ENCODE measurements at regions of chr6 and their contacts with region 1.

Region 1: GRCh38 chr6:30907758-30908591 is at the start of gene GTF2H4:
- DNase-seq: peak; percentile 99
- ATAC-seq: peak; percentile 95
- H3K4me3 ChIP-seq: peak within 1 kb of the TSS; percentile 76 to 98 (median 82)
- H3K27ac ChIP-seq: peak within 1 kb of the TSS; percentile 59
- H3K4me1 ChIP-seq: peaks cover 35% of the 10 kb centered on the region
- H3K27me3 ChIP-seq: no peaks in the 10 kb centered on the region; a peak in 1 of 5 replicates
- CTCF ChIP-seq: peak; percentile 12; the same call in 1 of the 2 replicates
- EP300 ChIP-seq: peak in 1 of 2 experiments; percentile 47; a peak in 1 of 4 replicates
- POLR2A ChIP-seq: peak; percentile 54 to 68
- RAD21 ChIP-seq: peak; percentile 52; the same call in 1 of the 2 replicates
- total RNA-seq, gene GTF2H4: 15.9 and 18.0 TPM in 2 replicates

Region 2: GRCh38 chr6:30883685-30884520 is 24.1 kb before region 1 on chr6 and contains the start of gene DDR1:
- CTCF ChIA-PET with region 1: no interaction called
- POLR2A ChIA-PET with region 1: interaction called, 45 read pairs
- in situ Hi-C with region 1: no loop called
- intact Hi-C with region 1: loop called (anchors 1 kb)
- DNase-seq: peak; percentile 38
- ATAC-seq: peak; percentile 57
- H3K4me3 ChIP-seq: peak within 1 kb of the TSS; percentile 80 to 91 (median 82)
- H3K27ac ChIP-seq: peak within 1 kb of the TSS; percentile 44
- H3K4me1 ChIP-seq: peaks cover 56% of the 10 kb centered on the region
- H3K27me3 ChIP-seq: peaks cover 6 to 27% of the 10 kb centered on the region in 2 experiments
- CTCF ChIP-seq: no peak
- EP300 ChIP-seq: no peak
- POLR2A ChIP-seq: no peak
- RAD21 ChIP-seq: no peak
- total RNA-seq, gene DDR1: 7.0 and 16.7 TPM in 2 replicates